ENCODE measurements at regions of chr10 and their contacts with region 1.

Region 1: DNA sequence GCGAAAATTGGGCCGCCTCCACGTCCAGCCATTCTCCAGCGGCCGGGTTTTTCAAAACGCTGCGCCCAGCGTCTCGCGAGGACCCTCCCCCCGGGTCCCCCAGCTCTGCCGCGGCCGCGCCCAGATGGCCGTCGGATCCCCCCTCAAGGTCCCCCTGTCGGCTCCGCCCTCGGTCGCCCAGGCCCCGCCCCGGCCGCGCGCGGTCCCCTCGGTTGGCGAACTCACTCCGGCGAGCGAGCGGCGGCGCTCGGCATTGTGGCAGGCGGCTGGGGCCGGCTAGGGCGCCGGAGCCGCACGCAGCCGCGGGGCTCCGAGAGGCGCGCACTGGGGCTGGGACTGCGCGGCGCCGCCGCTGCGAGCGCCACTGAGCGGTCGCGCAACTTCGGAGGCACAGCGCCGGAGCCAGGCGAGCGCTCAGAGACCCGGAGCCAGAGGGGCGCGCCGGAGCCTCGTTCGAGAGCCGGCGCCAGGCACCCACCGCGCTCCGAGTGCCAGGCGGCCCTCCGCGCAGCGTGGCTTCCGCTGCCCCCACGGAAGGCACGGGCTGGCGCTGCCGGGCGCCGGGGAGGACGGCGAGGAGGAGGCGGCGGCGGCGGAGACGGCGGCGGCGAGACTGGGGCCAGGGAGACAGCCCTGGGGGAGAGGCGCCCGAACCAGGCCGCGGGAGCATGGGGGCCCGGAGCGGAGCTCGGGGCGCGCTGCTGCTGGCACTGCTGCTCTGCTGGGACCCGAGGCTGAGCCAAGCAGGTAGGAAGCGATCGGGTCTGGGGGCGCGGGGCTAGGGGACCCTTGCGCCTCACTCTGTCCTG is at the start of gene UNC5B:
- DNase-seq: peak; percentile 93 to 96 (median 94)
- ATAC-seq: peak; percentile 72 to 93 (median 86)
- H3K4me3 ChIP-seq: peak within 1 kb of the TSS; percentile 63 to 98 (median 84)
- H3K27ac ChIP-seq: peak within 1 kb of the TSS; percentile 78 to 96 (median 91)
- H3K4me1 ChIP-seq: peaks cover 0 to 59% (median 38%) of the 10 kb centered on the region in 12 donors
- H3K27me3 ChIP-seq: peaks cover 0 to 48% (median 0%) of the 10 kb centered on the region in 9 donors
- CTCF ChIP-seq: peak in 11 of 12 donors; percentile 8 to 64 (median 48)
- POLR2A ChIP-seq: peak; percentile 45 to 95
- total RNA-seq, gene UNC5B: 6.9 to 22.8 (median 10.9) TPM

Region 2: DNA sequence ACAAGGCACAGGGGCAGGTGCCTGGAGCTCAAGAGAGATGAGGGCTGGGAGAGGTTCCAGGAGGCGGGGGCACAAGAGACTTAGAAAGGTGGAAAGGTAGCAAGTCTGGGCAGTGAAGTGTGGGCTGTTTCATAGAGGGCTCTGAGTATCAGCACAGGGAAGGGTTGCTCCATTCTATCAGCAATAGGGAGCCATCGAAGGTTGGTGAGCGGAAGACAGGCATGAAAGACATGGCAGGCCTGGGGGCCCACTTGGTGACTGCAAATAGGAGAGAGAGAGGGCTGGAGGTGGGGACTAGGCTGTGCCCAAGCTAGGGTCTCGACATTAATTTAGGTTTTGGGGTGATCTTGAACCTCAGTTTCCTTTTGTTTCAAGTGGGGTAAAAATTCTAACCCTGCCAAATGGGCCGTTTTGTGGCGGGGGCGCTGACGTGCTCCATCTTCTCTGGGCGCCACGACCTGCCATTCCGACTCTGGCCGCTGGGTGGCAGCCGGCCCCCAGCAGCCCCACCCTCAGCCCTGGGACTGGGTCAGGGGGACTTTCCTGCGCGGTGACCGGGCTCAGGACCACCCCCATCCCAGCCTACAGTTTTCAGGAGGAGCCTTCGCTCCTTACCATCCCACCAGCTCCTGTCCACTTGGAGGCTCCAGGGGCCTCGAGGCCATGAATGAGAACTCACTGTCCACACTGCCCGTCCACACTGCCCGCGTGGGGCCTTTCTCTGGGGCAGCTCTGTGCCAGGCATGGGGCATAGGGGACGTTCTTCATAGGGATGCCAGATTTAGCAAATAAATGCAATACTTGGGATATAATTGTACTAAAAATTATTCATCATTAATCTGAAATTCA is 286.9 kb before region 1 on chr10:
- intact Hi-C with region 1: loop called (anchors 1 to 5 kb)
- DNase-seq: peak in 2 of 5 donors; percentile 44 to 61
- ATAC-seq: peak; percentile 66 to 85 (median 76)
- H3K4me3 ChIP-seq: no peak overlapping the region
- H3K27ac ChIP-seq: peak overlapping the region in 3 of 12 donors; percentile 12 to 36 (median 19)
- H3K4me1 ChIP-seq: peaks cover 0 to 11% (median 0%) of the 10 kb centered on the region in 12 donors
- H3K27me3 ChIP-seq: peaks cover 0 to 4% (median 0%) of the 10 kb centered on the region in 9 donors
- CTCF ChIP-seq: peak; percentile 87 to 99 (median 96)
- POLR2A ChIP-seq: no peak

Region 3: DNA sequence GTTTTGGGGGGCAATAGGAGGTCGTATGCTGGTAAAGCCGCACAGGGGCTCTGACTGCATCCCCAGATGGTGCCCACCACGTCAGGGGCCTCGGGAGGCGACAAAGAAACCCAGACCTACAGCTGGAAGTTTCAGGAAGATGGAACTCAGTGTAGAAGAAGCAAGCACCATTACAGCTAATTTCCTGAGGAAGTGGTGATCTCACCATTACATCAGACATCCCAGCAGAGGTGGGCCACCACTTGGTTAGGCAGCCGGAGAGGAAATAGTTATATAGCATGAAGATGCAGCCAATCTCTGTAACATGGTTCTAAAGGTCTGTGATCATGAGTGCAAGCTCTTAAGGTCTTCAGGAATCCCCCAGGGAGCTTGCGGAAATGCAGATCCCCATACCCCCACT is 196.8 kb before region 1 on chr10:
- intact Hi-C with region 1: loop called in 1 of 10 experiments (anchors 10 kb)
- DNase-seq: no peak
- ATAC-seq: no peak
- H3K4me3 ChIP-seq: no peak overlapping the region
- H3K27ac ChIP-seq: no peak overlapping the region
- H3K4me1 ChIP-seq: peaks cover 0 to 11% (median 3%) of the 10 kb centered on the region in 12 donors
- H3K27me3 ChIP-seq: no peaks in the 10 kb centered on the region
- CTCF ChIP-seq: no peak
- POLR2A ChIP-seq: no peak

Region 4: DNA sequence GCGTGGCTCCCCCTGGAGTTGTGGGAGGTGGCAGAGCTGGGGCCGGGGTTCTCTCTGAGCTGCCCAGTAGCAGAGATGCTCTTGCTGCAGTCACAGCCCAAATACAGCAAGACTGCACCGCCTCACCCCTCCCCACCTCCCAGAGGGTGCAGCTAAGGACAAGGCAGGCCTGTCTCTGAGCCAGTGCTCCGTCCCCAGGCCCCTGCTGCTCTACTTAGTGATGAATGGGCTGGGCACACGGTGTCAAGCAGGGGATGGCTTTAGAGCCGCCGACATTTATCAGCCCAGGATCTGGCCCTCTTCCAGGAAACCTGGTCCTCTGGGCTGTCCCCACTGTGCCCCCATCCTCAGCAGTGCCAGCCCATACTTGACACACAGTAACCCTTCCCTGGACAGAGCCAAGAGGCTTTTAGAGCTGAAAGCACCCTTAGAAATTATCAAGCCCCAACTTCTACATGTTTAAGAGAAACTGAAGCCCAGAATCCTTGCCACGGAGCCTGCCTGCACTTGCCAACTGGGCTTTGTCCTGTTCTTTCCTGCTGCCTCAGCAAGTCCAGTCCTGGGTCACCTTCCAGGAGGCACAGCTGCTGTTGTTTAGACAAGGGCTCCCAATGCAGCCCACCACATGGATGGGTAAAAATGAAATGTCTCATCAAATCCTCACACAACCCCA is 137.3 kb before region 1 on chr10:
- intact Hi-C with region 1: loop called in 1 of 10 experiments (anchors 10 kb)
- DNase-seq: peak in 4 of 5 donors; percentile 40 to 76 (median 61)
- ATAC-seq: peak; percentile 59 to 79 (median 68)
- H3K4me3 ChIP-seq: no peak overlapping the region
- H3K27ac ChIP-seq: no peak overlapping the region
- H3K4me1 ChIP-seq: peaks cover 0 to 32% (median 7%) of the 10 kb centered on the region in 12 donors
- H3K27me3 ChIP-seq: no peaks in the 10 kb centered on the region
- CTCF ChIP-seq: no peak
- POLR2A ChIP-seq: no peak

Region 5: GRCh38 chr10:71252220-71252619 is 39.7 kb after region 1 on chr10:
- intact Hi-C with region 1: loop called in 1 of 10 experiments (anchors 5 kb)
- DNase-seq: peak in 2 of 5 donors; percentile 17 to 22
- ATAC-seq: no peak
- H3K4me3 ChIP-seq: no peak overlapping the region
- H3K27ac ChIP-seq: peak overlapping the region in 1 of 12 donors; percentile 30
- H3K4me1 ChIP-seq: peaks cover 12 to 96% (median 81%) of the 10 kb centered on the region in 12 donors
- H3K27me3 ChIP-seq: no peaks in the 10 kb centered on the region
- CTCF ChIP-seq: no peak
- POLR2A ChIP-seq: no peak

Region 6: DNA sequence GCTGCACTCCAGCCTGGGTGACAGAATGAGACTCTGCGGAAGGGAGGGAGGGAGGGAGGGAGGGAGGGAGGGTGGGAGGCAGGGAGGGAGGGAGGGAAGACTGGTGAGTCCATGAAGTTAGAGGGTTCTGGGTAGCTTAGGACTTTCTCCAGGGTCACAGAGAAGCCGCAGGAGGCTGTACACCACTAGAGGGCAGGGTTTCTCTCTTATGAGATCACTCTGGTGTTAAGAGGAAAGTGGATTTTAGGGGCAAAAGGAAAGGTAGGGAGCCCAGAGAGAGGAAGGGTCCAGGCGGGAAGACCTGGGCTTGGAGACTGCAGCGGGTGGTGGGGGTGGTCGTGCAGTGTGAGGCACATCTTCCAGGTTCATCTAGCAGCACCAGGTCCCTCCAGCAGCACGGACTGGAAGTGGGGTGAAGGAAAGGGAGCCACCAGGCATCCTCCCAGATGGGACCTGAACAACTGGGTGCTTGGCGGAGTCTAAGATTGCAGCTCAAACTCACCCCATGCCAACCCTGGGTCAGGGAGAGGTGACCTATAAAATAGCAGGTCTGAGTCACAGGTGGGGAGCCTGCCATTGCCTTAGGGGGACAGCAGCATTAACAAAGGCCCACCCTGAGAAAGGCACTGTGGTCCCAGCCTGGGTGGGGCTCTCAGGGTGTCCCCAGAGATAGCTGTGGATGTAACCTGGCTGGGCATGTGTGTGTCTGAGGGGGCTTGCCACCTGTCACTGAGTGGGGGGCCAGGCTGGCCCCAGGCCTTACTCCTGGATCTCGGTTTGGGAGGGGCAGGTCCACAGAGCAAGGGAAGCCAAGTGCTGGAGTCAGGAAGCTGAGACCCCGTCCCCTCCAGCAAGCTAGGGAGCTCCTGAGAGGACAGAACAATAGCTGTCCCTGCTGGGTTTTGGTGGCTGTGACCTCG is 58.0 kb after region 1 on chr10:
- intact Hi-C with region 1: loop called in 9 of 10 experiments (anchors 2 to 5 kb)
- DNase-seq: peak in 2 of 5 donors; percentile 52 to 57
- ATAC-seq: peak; percentile 14 to 32 (median 26)
- H3K4me3 ChIP-seq: no peak overlapping the region
- H3K27ac ChIP-seq: peak overlapping the region in 6 of 12 donors; percentile 74 to 89 (median 84)
- H3K4me1 ChIP-seq: peaks cover 0 to 96% (median 64%) of the 10 kb centered on the region in 12 donors
- H3K27me3 ChIP-seq: no peaks in the 10 kb centered on the region
- CTCF ChIP-seq: peak; percentile 32 to 69 (median 56)
- POLR2A ChIP-seq: no peak

Measured in heart left ventricle (tissue), 16 donors.